Activated naive CD4-positive, alpha-beta T cell treated with anti-CD3 and anti-CD28 coated beads for 36 hours (primary cell): ENCODE measurements at regions of chr11 and their contacts with region 1.

Region 1: DNA sequence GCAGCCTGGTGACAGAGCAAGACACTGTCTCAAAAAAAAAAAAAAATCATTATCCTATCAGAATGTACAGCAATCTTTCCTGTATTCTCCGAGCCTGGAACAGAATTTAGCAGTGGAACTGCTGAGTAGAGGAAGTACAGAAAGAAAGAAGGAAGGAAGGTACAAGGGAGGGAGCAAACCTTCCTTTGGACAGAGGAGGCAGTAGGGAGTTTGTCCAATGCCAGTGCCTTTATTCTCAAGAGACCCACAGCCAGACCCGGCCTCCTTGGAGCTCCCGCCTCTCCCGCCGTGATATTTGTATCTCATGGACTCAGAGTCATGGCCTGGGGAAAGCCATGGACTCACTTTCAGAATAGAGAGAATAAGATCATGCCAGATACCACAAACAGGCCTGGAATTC is 37.7 kb upstream of the LRRC55 start:
- DNase-seq: no peak
- H3K4me3 Mint-ChIP-seq: no peak overlapping the region
- H3K27ac Mint-ChIP-seq: no peak overlapping the region
- H3K4me1 Mint-ChIP-seq: no peaks in the 10 kb centered on the region
- H3K27me3 Mint-ChIP-seq: peaks cover 17% of the 10 kb centered on the region

Region 2: DNA sequence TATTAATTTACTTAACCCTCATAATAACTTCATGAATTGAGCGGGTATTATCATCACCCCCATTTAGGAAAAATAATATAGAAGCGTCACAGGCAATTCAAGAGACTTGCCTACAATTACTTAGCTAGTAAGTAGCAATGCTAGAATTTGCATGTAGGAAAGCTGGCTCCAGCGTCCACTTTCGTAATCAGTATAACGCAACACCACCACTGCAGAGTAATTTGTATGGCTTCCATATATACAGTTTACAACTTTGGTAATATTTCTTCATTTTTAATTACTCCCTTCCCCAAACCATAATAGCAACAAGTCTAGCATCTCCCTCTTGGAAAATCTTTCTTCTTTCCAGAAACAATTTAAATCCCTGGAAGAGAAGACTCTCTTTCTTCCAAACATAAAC is 245.2 kb before region 1 on chr11:
- CTCF ChIA-PET with region 1: no interaction called
- intact Hi-C with region 1: no loop called
- DNase-seq: no peak
- H3K4me3 Mint-ChIP-seq: no peak overlapping the region
- H3K27ac Mint-ChIP-seq: no peak overlapping the region
- H3K4me1 Mint-ChIP-seq: no peaks in the 10 kb centered on the region
- H3K27me3 Mint-ChIP-seq: no peaks in the 10 kb centered on the region

Region 3: GRCh38 chr11:57205041-57205671 is 61.1 kb after region 1 on chr11:
- CTCF ChIA-PET with region 1: no interaction called
- intact Hi-C with region 1: loop called (anchors 10 kb)
- DNase-seq: no peak
- H3K4me3 Mint-ChIP-seq: no peak overlapping the region
- H3K27ac Mint-ChIP-seq: no peak overlapping the region
- H3K4me1 Mint-ChIP-seq: no peaks in the 10 kb centered on the region
- H3K27me3 Mint-ChIP-seq: peaks cover 16% of the 10 kb centered on the region

Region 4: GRCh38 chr11:57219021-57219627 is 75.0 kb after region 1 on chr11:
- CTCF ChIA-PET with region 1: no interaction called
- intact Hi-C with region 1: no loop called
- DNase-seq: no peak
- H3K4me3 Mint-ChIP-seq: no peak overlapping the region
- H3K27ac Mint-ChIP-seq: no peak overlapping the region
- H3K4me1 Mint-ChIP-seq: no peaks in the 10 kb centered on the region
- H3K27me3 Mint-ChIP-seq: peaks cover 5% of the 10 kb centered on the region